Pancreas (tissue), 10 donors: ENCODE measurements at regions of chr15 and their contacts with region 1.

Region 1: DNA sequence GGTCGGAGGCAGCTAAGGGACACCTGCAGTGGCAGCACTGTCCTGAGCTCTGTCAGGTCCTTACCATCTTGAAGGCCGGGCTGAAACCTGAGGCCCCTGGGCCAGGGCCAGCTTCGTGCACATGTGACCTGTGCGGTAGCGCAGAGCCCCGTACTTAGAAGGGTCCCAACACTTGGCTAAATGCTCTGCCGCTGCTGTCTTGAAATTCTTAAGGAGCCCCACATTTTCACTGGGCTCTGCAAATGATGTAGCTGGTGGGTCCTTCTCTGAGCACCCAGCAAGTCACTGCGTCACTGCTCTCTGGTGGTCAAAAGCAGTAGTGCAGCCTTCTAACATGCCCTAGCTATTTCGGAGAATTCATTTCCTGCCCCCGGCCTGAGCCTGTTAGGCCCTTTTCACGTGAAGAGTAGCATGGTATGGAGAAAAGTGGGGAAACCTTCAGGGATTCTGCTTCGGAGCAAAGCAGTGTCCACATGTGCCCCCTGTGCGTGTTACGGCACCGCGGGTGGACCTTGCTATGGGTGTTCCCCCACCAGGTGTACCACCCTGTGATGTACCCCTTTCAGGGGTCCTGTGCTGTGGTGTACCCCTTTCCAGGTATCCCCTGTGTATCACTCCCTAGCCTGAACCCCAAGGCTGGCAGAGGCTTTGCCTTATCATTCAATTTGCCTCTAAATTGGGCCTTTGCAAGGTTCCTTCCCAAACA is 79.7 kb downstream of the TMEM266 start:
- DNase-seq: peak in 5 of 6 donors; percentile 56 to 84 (median 69)
- ATAC-seq: peak; percentile 84 to 96 (median 96)
- H3K4me3 ChIP-seq: no peak overlapping the region
- H3K27ac ChIP-seq: no peak overlapping the region
- H3K4me1 ChIP-seq: peaks cover 0 to 6% (median 0%) of the 10 kb centered on the region in 3 donors
- H3K27me3 ChIP-seq: no peaks in the 10 kb centered on the region
- CTCF ChIP-seq: peak; percentile 78 to 92 (median 90)

Region 2: DNA sequence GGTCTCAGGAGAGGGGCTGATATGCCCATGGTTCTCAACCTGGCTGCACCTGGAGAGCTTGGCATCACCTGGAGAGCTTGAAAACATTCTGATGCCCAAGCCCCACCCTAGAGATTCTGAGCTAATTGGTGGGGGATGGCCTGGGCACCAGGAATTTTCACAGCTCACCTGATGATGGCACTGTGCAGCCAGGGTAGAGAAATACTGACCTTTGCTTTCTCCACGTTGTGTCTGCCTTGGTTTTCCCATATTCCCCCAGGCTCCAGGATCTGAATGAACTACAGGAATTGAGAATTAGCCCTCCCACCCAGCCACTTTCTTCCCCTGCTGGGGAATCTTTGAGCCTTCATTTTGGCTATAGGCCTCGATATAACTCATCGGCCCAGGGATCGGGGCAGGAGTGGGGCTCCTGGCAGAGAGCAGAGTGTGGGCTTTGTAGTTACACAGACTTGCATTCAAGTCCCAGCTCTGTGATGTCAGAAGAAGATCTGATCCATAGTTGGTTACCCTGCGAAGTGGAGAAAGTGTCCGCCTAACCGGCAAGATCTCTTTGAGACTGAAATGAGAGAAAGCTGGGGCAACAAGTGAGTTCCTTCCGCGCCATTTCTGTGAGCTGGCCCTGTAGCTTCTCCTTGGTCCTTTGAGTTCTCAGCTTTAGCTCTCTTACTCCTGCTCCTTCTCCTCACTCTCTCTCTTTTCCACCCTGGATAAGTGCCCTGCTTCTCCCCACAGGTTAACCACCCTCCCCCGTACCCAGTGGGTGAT is 329.4 kb before region 1 on chr15:
- intact Hi-C with region 1: loop called in 1 of 3 experiments (anchors 10 kb)
- DNase-seq: peak in 1 of 6 donors; percentile 34
- ATAC-seq: peak; percentile 46 to 88 (median 86)
- H3K4me3 ChIP-seq: no peak overlapping the region
- H3K27ac ChIP-seq: no peak overlapping the region
- H3K4me1 ChIP-seq: no peaks in the 10 kb centered on the region
- H3K27me3 ChIP-seq: no peaks in the 10 kb centered on the region
- CTCF ChIP-seq: peak in 3 of 4 donors; percentile 17 to 29 (median 20)

Region 3: DNA sequence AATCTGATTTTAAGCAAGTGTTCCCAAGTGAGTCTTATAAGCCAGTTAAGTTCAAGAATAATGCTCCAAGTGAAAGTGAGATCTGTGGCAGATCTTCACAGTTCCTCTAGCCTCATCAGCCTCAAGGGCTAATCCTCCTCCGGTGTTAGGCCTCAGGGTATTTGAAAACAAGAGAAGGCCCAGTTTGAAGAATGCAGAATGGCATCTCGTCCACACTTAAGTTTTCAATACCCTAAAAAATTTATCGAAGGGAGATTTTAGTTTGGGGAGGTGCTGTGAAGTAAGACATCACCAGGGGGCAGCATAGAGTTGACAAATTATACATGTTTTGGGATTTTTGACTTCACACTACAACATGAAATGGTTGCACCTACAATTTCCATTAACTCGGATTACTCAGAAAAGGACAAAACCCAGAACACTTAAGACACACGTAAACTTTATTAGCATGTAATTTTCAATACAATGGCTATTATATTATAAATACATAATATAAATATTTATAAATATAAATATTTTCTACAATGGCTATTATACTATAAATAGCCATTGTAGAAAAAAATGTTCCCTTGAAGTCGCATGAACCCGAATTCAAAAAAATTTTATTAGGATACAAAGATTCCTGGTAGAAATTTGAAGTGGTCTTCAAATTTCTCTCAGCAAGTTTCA is 82.1 kb before region 1 on chr15:
- intact Hi-C with region 1: loop called in 2 of 3 experiments (anchors 5 to 10 kb)
- DNase-seq: peak in 3 of 6 donors; percentile 24 to 49 (median 24)
- ATAC-seq: peak; percentile 7 to 49 (median 44)
- H3K4me3 ChIP-seq: peak overlapping the region in 2 of 4 donors; percentile 9 to 30
- H3K27ac ChIP-seq: peak overlapping the region in 2 of 4 donors; percentile 4 to 43
- H3K4me1 ChIP-seq: peaks cover 0 to 9% (median 0%) of the 10 kb centered on the region in 3 donors
- H3K27me3 ChIP-seq: no peaks in the 10 kb centered on the region
- CTCF ChIP-seq: peak; percentile 52 to 75 (median 62)